Tibial artery (tissue), 4 donors: ENCODE measurements at regions of chr18 and their contacts with region 1.

Region 1: DNA sequence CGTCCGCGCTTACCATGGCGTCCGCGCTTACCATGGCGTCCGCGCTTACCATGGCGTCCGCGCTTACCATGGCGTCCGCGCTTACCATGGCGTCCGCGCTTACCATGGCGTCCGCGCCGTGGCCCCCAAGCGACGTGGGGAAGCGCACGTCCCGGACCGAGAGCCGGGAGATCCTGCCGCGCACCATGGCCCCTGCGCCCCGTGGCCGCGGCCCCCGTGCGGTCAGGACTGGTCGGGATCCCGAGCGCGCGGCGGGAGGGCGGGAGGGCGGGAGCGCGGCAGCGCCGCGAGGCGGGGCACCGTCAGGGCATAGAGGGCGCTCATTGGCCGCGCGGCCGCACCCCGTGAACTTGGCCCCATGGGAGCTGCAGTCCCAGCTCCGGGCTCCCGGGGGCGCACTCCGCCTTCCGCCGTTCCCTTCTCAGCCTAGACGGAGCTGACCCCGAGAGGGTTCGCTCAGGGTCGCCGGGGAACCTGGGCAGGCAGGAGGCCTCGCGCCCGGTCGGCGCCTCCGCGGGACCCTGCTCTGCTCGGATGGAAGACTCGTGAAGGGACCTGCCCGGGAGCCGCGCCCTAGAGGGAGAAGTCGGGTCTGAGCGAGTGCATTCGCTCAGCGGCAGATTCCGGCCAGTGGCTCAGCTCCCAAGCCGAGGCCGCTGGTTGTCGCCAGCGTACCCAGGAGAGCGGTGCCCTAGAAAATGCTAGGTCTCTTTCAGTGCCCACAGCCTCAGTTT is at the start of gene ENOSF1:
- DNase-seq: peak; percentile 70 to 88
- H3K4me3 ChIP-seq: peak within 1 kb of the TSS; percentile 65 to 67
- H3K27ac ChIP-seq: peak within 1 kb of the TSS; percentile 67 to 78
- H3K4me1 ChIP-seq: peaks cover 0 to 18% (median 7%) of the 10 kb centered on the region in 4 donors
- H3K27me3 ChIP-seq: no peaks in the 10 kb centered on the region
- CTCF ChIP-seq: peak; percentile 57 to 76

Region 2: DNA sequence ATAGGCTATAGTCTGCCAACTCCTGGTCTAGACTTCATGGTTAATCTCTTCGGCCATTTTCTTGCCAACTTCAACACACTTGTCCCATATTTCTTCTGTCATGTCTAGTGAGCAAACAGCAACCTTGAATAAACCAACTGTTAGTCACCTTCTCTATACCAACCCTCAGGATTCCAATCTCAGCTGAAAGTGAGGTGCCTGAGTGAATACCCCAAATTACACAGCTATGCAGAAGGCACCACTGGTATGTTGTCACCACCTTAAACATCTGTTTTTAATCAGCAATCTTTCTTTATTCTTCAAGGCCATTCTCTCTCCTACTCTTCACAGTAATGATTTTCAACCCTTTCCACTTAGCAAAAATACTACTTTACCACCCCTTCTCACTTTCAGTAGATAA is 484.0 kb before region 1 on chr18:
- intact Hi-C with region 1: no loop called
- DNase-seq: no peak
- H3K4me3 ChIP-seq: no peak overlapping the region
- H3K27ac ChIP-seq: no peak overlapping the region
- H3K4me1 ChIP-seq: no peaks in the 10 kb centered on the region
- H3K27me3 ChIP-seq: no peaks in the 10 kb centered on the region
- CTCF ChIP-seq: no peak

Region 3: DNA sequence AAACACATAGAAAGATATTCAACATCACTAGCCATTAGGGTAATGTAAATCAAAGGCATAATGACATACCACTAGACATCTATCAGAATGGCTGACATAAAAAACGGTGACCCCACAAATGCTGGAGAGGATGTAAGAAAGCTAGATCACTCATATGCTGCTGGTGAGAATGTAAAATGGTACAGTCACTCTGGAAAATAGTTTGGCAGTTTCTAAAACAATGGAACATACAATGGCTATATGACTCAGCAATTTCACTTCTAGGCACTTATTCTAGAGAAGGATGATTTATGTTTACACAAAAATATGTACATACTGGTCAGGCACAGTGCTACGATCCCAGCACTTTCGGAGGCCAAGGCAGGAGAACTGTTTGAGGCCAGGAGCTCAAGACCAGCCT is 299.3 kb before region 1 on chr18:
- intact Hi-C with region 1: no loop called
- DNase-seq: no peak
- H3K4me3 ChIP-seq: no peak overlapping the region
- H3K27ac ChIP-seq: no peak overlapping the region
- H3K4me1 ChIP-seq: no peaks in the 10 kb centered on the region
- H3K27me3 ChIP-seq: no peaks in the 10 kb centered on the region
- CTCF ChIP-seq: no peak

Region 4: DNA sequence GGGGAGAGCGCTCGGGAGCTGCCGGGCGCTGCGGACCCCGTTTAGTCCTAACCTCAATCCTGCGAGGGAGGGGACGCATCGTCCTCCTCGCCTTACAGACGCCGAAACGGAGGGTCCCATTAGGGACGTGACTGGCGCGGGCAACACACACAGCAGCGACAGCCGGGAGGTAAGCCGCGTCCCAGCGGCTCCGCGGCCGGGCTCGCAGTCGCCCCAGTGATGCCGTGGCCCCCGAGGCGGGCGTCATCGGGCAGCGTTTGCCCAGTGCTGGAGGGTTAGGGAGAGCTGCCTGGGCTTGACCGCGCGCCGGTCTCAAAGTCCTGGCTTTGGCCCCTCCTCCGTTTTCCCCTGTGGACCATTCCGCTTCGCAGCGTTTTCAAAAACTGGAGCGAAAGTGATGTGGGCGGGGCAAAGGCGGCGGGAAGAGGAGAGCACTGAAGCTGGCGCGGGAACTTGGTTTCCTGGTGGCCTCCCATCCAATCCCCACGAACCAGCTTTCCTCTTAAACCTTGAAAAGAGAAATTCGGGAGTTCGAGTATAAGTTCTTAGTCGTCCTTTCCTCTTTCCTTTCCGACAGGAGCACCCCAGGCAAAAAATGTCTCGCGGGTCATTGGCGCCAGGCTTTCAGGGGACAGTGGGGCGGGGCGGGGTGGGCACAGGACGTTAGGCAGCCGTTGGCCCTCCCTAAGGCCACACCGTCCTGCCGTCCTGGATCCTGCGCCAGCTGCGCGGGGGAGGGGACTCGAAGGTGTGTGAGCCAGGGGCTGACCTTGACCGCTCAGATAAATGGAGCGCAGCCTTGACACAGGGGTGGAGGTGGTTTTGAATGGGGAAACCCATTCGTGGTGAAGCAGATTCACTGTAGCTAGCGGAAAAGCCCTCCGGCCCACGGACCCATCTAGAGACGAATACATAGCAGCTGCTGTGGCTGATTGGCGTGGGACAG is 54.3 kb before region 1 on chr18:
- intact Hi-C with region 1: loop called (anchors 10 kb)
- DNase-seq: peak; percentile 76 to 85
- H3K4me3 ChIP-seq: peak overlapping the region; percentile 64 to 81
- H3K27ac ChIP-seq: peak overlapping the region in 1 of 2 donors; percentile 34
- H3K4me1 ChIP-seq: peaks cover 0 to 14% (median 7%) of the 10 kb centered on the region in 4 donors
- H3K27me3 ChIP-seq: peaks cover 0 to 14% of the 10 kb centered on the region in 2 donors
- CTCF ChIP-seq: no peak

Region 5: GRCh38 chr18:812376-813171 is 100.0 kb after region 1 on chr18:
- intact Hi-C with region 1: loop called (anchors 5 kb)
- DNase-seq: peak; percentile 82 to 90
- H3K4me3 ChIP-seq: peak overlapping the region; percentile 94 to 96
- H3K27ac ChIP-seq: peak overlapping the region; percentile 96 to 98
- H3K4me1 ChIP-seq: peaks cover 0 to 16% (median 2%) of the 10 kb centered on the region in 4 donors
- H3K27me3 ChIP-seq: no peaks in the 10 kb centered on the region
- CTCF ChIP-seq: no peak